ENCODE measurements at regions of chr6 and their contacts with region 1.

Region 1: GRCh38 chr6:111171577-111172400 is 84.5 kb downstream of the SLC16A10 start:
- DNase-seq: peak; percentile 4
- H3K4me3 ChIP-seq: no peak overlapping the region
- H3K27ac ChIP-seq: no peak overlapping the region
- H3K4me1 ChIP-seq: no peaks in the 10 kb centered on the region
- H3K27me3 ChIP-seq: peaks cover 12% of the 10 kb centered on the region
- CTCF ChIP-seq: no peak

Region 2: DNA sequence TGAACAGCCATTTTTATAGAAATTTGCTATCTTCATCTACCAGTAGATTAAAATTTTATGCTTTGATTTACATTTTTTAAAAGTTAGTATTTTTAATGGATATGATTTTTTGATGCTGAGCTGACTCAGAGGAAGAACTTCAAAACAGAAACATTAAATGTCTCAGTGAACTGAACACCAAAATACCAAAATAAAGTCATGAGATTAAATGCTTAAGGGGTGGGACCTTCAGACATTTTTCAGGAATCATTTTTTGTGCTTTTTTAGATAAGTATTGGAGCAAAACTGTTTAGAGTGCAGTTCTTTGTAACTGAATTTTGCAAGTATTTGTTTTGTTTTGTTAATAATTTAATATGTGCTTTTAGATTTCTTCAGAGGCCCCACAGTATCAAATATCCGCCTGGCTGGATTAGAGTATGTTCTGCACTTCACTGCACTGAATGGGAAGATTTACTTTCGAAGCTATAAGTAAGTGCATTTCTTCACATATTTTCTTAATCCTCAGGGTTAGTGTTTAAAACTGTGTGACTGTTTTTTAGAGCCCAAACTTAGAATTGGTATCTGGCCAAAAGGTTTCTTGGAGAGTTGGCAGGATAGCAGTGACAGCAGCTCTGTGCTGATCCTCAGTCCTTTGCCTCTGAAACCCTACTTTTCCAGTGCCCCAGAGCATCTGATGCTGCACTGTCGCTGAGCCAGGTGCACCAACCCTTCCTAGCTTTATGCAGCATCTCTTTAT is 156.2 kb before region 1 on chr6:
- CTCF ChIA-PET with region 1: no interaction called
- dilution Hi-C with region 1: no loop called
- in situ Hi-C with region 1: no loop called
- intact Hi-C with region 1: no loop called
- DNase-seq: no peak
- H3K4me3 ChIP-seq: no peak overlapping the region
- H3K27ac ChIP-seq: no peak overlapping the region
- H3K4me1 ChIP-seq: no peaks in the 10 kb centered on the region
- H3K27me3 ChIP-seq: no peaks in the 10 kb centered on the region
- CTCF ChIP-seq: no peak

Region 3: DNA sequence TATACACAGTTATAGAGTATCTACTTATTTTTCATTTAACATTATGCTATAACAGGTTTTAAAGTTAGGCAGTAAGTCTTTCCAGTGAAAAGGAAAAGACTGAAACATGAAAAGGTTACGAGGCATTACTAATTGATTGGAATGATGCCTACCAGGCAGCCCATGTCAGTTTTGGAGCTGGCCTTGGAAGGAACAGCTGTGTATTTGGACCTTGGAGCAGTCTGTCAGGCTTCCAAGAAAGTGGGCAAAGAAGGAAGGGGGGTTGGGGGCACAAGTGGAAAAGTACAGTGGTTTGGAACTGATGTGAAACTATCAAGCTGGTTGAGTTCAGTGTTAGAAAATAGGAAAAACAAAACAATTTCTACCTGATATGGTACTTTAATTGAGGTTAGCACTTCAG is 42.8 kb before region 1 on chr6:
- CTCF ChIA-PET with region 1: no interaction called
- dilution Hi-C with region 1: no loop called
- in situ Hi-C with region 1: no loop called
- intact Hi-C with region 1: loop called (anchors 5 kb)
- DNase-seq: no peak
- H3K4me3 ChIP-seq: no peak overlapping the region
- H3K27ac ChIP-seq: no peak overlapping the region
- H3K4me1 ChIP-seq: no peaks in the 10 kb centered on the region
- H3K27me3 ChIP-seq: no peaks in the 10 kb centered on the region
- CTCF ChIP-seq: no peak

Region 4: DNA sequence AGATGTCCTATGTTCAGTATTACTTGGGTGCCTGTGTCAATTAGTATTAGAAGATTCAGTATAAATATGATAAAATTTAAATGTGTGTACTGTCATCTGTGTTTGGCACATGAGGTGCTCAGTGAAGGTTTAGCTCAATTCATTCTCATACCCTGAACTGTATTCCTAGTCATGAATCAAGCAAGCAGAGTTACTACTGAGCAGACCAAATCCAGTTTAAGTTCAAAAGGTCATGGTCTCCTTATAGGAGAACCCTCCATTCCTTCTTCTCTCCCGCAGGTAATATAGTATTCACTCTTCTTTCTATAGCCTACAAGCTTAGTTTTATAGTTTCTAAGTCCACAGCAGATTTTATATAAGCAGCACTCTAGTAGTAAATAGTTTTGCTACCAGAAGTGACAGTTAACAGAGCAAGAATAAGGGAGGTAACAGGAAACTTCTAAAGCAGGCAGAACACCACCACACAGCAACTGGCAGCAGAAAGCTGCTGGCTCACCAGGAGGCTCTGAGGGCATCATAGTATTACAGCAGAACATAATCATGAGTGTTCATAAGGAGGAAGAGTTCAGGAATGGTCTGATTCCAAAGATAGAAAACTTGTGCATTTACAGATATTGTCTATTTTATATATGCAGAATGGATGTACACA is 48.7 kb after region 1 on chr6:
- CTCF ChIA-PET with region 1: no interaction called
- dilution Hi-C with region 1: loop called (anchors 5 kb)
- in situ Hi-C with region 1: no loop called
- intact Hi-C with region 1: no loop called
- DNase-seq: no peak
- H3K4me3 ChIP-seq: no peak overlapping the region
- H3K27ac ChIP-seq: no peak overlapping the region
- H3K4me1 ChIP-seq: no peaks in the 10 kb centered on the region
- H3K27me3 ChIP-seq: peaks cover 3% of the 10 kb centered on the region
- CTCF ChIP-seq: no peak

Measured in mammary epithelial cell (primary cell).